CD4-positive, alpha-beta memory T cell (primary cell): ENCODE measurements at regions of chr7 and their contacts with region 1.

Region 1: GRCh38 chr7:23712368-23713284 is 2.6 kb downstream of the STK31 start:
- DNase-seq: peak in 4 of 5 donors; percentile 37 to 53 (median 46)
- H3K4me3 ChIP-seq: no peak overlapping the region
- H3K4me3 Mint-ChIP-seq: no peak overlapping the region
- H3K27ac ChIP-seq: no peak overlapping the region
- H3K27ac Mint-ChIP-seq: no peak overlapping the region
- H3K4me1 ChIP-seq: no peaks in the 10 kb centered on the region
- H3K4me1 Mint-ChIP-seq: no peaks in the 10 kb centered on the region
- H3K27me3 ChIP-seq: no peaks in the 10 kb centered on the region
- H3K27me3 Mint-ChIP-seq: no peaks in the 10 kb centered on the region

Region 2: GRCh38 chr7:23273141-23273599 is 439.5 kb before region 1 on chr7:
- CTCF ChIA-PET with region 1: interaction called, 23 read pairs
- POLR2A ChIA-PET with region 1: no interaction called
- intact Hi-C with region 1: loop called (anchors 1 kb)
- DNase-seq: peak; percentile 77 to 90 (median 80)
- H3K4me3 ChIP-seq: no peak overlapping the region
- H3K4me3 Mint-ChIP-seq: peak overlapping the region in 7 of 8 donors; percentile 24 to 69 (median 65)
- H3K27ac ChIP-seq: no peak overlapping the region
- H3K27ac Mint-ChIP-seq: peak overlapping the region in 3 of 7 donors; percentile 4 to 18 (median 12)
- H3K4me1 ChIP-seq: peaks cover 4% of the 10 kb centered on the region
- H3K4me1 Mint-ChIP-seq: peaks cover 0 to 15% (median 7%) of the 10 kb centered on the region in 4 donors
- H3K27me3 ChIP-seq: no peaks in the 10 kb centered on the region
- H3K27me3 Mint-ChIP-seq: peaks cover 0 to 6% of the 10 kb centered on the region in 2 donors

Region 3: DNA sequence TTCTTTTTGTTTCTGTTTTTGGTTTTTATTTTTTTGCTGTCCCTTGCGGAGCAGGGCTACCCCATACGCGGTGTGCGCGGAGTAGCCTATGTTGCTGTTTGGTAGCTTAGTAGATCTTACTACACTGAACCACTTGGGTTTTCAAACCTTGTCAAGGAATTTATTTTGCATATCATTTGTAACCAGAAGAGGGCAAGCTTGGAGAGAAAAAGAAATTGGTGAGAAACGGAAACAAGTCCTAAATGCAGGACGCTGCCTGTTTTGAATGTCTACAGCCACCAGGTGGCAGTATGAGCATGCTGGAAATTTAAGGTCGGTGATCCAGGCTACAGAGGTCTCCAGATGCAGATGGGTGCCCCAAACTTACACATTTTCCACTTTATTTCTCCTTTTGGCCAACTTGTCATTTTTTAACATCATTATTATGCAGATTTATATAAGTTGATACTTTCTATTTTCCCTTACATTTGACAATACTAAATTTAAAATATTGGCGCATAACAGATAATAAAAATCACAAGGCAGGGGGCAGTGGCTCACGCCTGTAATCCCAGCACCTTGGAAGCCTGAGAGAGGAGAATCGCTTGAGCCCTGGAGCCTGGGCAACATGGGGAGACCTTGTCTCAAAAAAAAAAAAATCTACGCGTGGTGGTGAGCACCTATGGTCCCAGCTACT is 165.6 kb before region 1 on chr7:
- CTCF ChIA-PET with region 1: interaction called, 35 read pairs
- POLR2A ChIA-PET with region 1: no interaction called
- intact Hi-C with region 1: loop called (anchors 1 kb)
- DNase-seq: peak; percentile 78 to 85 (median 84)
- H3K4me3 ChIP-seq: no peak overlapping the region
- H3K4me3 Mint-ChIP-seq: peak overlapping the region in 1 of 8 donors; percentile 39
- H3K27ac ChIP-seq: no peak overlapping the region
- H3K27ac Mint-ChIP-seq: peak overlapping the region in 5 of 7 donors; percentile 0 to 68 (median 51)
- H3K4me1 ChIP-seq: no peaks in the 10 kb centered on the region
- H3K4me1 Mint-ChIP-seq: peaks cover 5 to 7% (median 6%) of the 10 kb centered on the region in 4 donors
- H3K27me3 ChIP-seq: no peaks in the 10 kb centered on the region
- H3K27me3 Mint-ChIP-seq: no peaks in the 10 kb centered on the region

Region 4: GRCh38 chr7:23696916-23697441 is 15.6 kb before region 1 on chr7:
- CTCF ChIA-PET with region 1: interaction called, 50 read pairs
- POLR2A ChIA-PET with region 1: no interaction called
- intact Hi-C with region 1: no loop called
- DNase-seq: peak; percentile 30 to 49 (median 38)
- H3K4me3 ChIP-seq: no peak overlapping the region
- H3K4me3 Mint-ChIP-seq: peak overlapping the region in 1 of 8 donors; percentile 44
- H3K27ac ChIP-seq: no peak overlapping the region
- H3K27ac Mint-ChIP-seq: peak overlapping the region in 3 of 7 donors; percentile 19 to 62 (median 36)
- H3K4me1 ChIP-seq: no peaks in the 10 kb centered on the region
- H3K4me1 Mint-ChIP-seq: peaks cover 0 to 6% (median 3%) of the 10 kb centered on the region in 4 donors
- H3K27me3 ChIP-seq: no peaks in the 10 kb centered on the region
- H3K27me3 Mint-ChIP-seq: no peaks in the 10 kb centered on the region